GM12878 (cell line): ENCODE measurements at regions of chr14 and their contacts with region 1.

Region 1: GRCh38 chr14:39174560-39175444 is at the start of gene PNN:
- DNase-seq: peak; percentile 99
- ATAC-seq: peak; percentile 93
- H3K4me3 ChIP-seq: peak within 1 kb of the TSS; percentile 90
- H3K27ac ChIP-seq: peak within 1 kb of the TSS; percentile 90
- H3K4me1 ChIP-seq: peaks cover 7% of the 10 kb centered on the region
- H3K27me3 ChIP-seq: no peaks in the 10 kb centered on the region
- CTCF ChIP-seq: no peak
- EP300 ChIP-seq: no peak; a peak in 1 of 4 replicates
- POLR2A ChIP-seq: peak; percentile 96
- RAD21 ChIP-seq: no peak
- polyA plus RNA-seq, gene PNN: 44.2 to 55.4 TPM

Region 2: DNA sequence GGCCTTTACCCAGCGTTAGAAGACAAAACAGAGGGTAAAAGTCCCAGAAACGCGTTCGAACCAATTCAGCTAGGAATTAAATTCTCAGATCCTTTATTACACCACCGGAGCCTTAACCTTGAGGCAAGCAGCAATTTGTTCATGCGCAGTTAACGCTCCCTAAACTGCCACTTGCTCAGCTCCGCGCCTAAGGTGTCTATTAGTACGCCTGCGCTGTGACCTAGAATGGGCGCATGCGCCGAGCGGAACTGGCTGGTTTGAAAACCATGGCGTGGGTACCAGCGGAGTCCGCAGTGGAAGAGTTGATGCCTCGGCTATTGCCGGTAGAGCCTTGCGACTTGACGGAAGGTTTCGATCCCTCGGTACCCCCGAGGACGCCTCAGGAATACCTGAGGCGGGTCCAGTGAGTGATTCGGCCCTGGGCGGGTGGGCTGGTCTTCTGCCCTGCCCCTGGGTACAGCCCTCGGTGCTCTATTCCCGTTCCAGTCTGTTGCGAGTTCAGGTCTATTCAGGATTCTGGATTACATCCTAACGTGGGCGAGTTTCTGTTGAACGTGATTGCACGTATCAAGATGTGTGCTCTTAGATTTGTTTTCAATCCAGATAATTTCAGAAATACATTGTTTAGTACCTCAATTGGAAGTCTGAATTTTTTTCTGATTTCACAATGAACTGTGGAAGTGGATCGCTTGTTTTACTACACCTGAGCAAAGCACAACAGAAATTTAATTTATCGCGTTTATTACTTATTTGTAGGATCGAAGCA is 60.5 kb before region 1 on chr14 and contains the start of gene GEMIN2:
- CTCF ChIA-PET with region 1: interaction called, 4 read pairs
- POLR2A ChIA-PET with region 1: interaction called, 7 read pairs
- RAD21 ChIA-PET with region 1: interaction called, 3 read pairs
- SMC1A ChIA-PET with region 1: interaction called, 5 read pairs
- in situ Hi-C with region 1: loop called (anchors 5 kb)
- intact Hi-C with region 1: loop called (anchors 2 kb)
- DNase-seq: peak; percentile 89
- ATAC-seq: peak; percentile 94
- H3K4me3 ChIP-seq: peak within 1 kb of the TSS; percentile 73
- H3K27ac ChIP-seq: peak within 1 kb of the TSS; percentile 64
- H3K4me1 ChIP-seq: peaks cover 15% of the 10 kb centered on the region
- H3K27me3 ChIP-seq: no peaks in the 10 kb centered on the region
- CTCF ChIP-seq: no peak
- EP300 ChIP-seq: no peak
- POLR2A ChIP-seq: peak; percentile 91
- RAD21 ChIP-seq: no peak
- polyA plus RNA-seq, gene GEMIN2: 51.5 to 69.3 TPM